AG04449 (cell line): ENCODE measurements at regions of chr15 and their contacts with region 1.

Region 1: GRCh38 chr15:55846116-55846707 is 103.3 kb upstream of the PRTG start:
- DNase-seq: peak; percentile 40
- H3K4me3 ChIP-seq: no peak overlapping the region
- CTCF ChIP-seq: peak; percentile 66

Region 2: GRCh38 chr15:55685286-55685685 is 160.9 kb before region 1 on chr15:
- CTCF ChIA-PET with region 1: no interaction called
- POLR2A ChIA-PET with region 1: no interaction called
- DNase-seq: no peak
- H3K4me3 ChIP-seq: no peak overlapping the region
- CTCF ChIP-seq: no peak

Region 3: GRCh38 chr15:55829826-55830225 is 16.4 kb before region 1 on chr15:
- CTCF ChIA-PET with region 1: interaction called, 90 read pairs
- POLR2A ChIA-PET with region 1: no interaction called
- DNase-seq: no peak
- H3K4me3 ChIP-seq: no peak overlapping the region
- CTCF ChIP-seq: no peak

Region 4: DNA sequence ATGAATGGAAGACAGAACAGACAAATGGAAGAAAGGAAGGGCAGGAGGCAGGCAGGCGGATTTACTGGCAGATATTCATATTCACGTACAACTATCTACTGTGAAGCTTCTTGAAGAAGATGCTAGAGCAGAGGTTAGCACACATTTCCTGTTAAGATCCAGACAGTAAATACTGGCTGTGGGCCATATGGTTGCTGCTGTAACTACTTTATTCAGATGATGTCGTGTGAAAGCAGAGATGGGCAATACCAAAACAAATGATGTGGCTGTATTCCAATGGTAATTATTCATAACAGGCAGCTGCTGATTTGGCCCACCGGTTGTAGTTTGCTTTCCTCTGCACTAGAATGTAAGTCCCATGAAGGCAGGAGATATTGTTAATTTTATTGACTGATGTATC is 12.4 kb after region 1 on chr15:
- CTCF ChIA-PET with region 1: interaction called, 25 read pairs
- POLR2A ChIA-PET with region 1: no interaction called
- DNase-seq: no peak
- H3K4me3 ChIP-seq: no peak overlapping the region
- CTCF ChIP-seq: no peak

Region 5: DNA sequence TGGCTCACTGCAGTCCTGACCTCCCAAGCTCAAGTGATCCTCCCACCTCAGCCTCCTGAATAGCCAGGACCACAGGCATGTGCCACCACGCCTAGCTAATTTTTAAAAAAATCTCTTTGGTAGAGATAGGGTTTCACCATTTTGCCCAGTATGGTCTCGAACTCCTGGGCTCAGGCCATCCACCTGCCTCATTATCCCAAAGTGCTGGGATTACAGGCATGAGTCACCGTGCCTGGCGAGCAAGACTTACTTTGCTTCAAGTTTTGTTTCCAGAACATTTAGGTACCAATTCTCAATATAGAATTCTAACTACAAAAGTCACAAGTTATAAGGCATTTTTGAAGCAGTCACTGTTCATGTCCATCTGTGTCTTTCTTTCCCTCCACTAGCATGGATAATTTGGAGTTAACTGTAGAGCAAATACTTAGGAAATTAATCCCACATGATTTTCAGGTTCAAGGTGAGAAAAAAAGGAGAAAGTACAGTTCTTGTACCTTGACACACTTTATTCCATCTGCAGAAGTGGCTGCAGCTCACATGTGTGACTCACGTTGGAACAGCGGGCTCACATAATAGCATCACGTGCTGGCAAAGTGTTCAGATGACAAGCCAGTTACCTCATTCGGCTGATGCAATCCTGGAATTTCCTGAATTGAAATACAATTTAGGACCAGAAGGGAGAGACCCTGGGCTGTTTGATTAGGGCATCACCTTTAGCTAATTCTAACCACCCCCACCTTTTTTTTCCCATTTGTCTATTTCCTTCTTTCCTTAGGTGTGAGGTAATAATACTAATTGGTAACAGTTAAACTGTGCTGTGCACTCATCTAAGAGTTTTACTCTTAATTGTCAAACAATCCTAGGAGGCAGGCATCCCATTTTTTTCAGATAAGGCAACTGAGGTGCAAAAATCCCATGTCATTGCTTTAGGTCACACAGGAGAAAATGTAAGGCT is 194.1 kb after region 1 on chr15:
- CTCF ChIA-PET with region 1: no interaction called
- POLR2A ChIA-PET with region 1: no interaction called
- DNase-seq: peak; percentile 77
- H3K4me3 ChIP-seq: no peak overlapping the region
- CTCF ChIP-seq: no peak